ENCODE measurements at regions of chr19 and their contacts with region 1.

Region 1: GRCh38 chr19:44960906-44961728 is 5.9 kb downstream of the CLPTM1 start:
- DNase-seq: peak; percentile 24
- ATAC-seq: peak; percentile 84
- H3K4me3 ChIP-seq: no peak overlapping the region; the same call in 1 of the 2 replicates
- H3K27ac ChIP-seq: peak overlapping the region; percentile 24; the same call in 1 of the 2 replicates
- H3K4me1 ChIP-seq: peaks cover 14% of the 10 kb centered on the region
- H3K27me3 ChIP-seq: no peaks in the 10 kb centered on the region
- CTCF ChIP-seq: no peak
- EP300 ChIP-seq: no peak
- POLR2A ChIP-seq: no peak
- RAD21 ChIP-seq: no peak

Region 2: GRCh38 chr19:45069056-45069455 is 107.9 kb after region 1 on chr19:
- CTCF ChIA-PET with region 1: no interaction called
- POLR2A ChIA-PET with region 1: interaction called, 10 read pairs
- RAD21 ChIA-PET with region 1: no interaction called
- SMC1A ChIA-PET with region 1: no interaction called
- in situ Hi-C with region 1: no loop called
- intact Hi-C with region 1: no loop called
- DNase-seq: no peak
- ATAC-seq: peak; percentile 42
- H3K4me3 ChIP-seq: no peak overlapping the region
- H3K27ac ChIP-seq: no peak overlapping the region
- H3K4me1 ChIP-seq: peaks cover under 1% of the 10 kb centered on the region; the same call in 1 of the 2 replicates
- H3K27me3 ChIP-seq: no peaks in the 10 kb centered on the region
- CTCF ChIP-seq: no peak
- EP300 ChIP-seq: no peak
- POLR2A ChIP-seq: no peak
- RAD21 ChIP-seq: no peak

Region 3: DNA sequence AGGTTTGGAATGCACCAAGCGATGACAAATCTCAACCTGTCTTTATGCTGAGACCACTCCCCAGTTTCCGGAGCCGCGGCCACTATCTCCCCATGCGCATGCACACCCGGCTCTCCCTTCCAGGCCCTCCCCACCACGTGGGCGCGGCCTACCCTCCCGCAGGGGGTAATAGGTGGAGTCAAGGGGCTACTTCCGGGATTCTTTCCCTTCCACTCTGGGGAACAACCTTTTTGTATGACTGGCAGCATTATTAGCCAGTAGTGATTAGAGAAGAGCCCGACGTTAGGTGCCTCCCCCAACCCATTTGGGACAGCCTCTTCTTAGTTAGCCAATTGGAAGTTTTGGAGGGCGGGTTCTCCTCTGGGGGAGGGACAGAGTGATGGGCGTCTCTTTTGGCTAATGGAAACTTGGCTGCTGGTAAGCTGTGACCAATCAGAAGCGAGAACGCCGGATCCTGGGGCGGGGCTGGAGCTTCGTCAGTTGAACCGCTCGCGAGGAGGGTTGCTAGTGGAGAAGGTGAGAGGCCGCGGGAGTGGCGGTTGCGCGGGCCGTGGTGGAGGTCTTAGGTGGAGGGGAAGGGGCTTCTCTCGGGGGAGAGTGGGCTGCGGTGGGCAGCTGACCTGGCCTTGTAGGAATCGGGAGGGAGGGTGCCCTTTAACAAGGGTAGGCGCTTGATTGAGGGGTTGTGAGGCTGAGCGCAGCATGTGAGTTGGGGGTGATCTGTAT is 1034.0 kb after region 1 on chr19 and contains the start of gene CCDC61:
- CTCF ChIA-PET with region 1: no interaction called
- POLR2A ChIA-PET with region 1: no interaction called
- RAD21 ChIA-PET with region 1: no interaction called
- SMC1A ChIA-PET with region 1: no interaction called
- in situ Hi-C with region 1: no loop called
- intact Hi-C with region 1: no loop called
- DNase-seq: peak; percentile 99
- ATAC-seq: peak; percentile 98
- H3K4me3 ChIP-seq: peak within 1 kb of the TSS; percentile 86
- H3K27ac ChIP-seq: peak within 1 kb of the TSS; percentile 66
- H3K4me1 ChIP-seq: peaks cover 9% of the 10 kb centered on the region
- H3K27me3 ChIP-seq: no peaks in the 10 kb centered on the region
- CTCF ChIP-seq: no peak
- EP300 ChIP-seq: no peak
- POLR2A ChIP-seq: peak; percentile 96
- RAD21 ChIP-seq: no peak
- polyA plus RNA-seq, gene CCDC61: 0.27 to 0.95 TPM